BJ (cell line): ENCODE measurements at regions of chr11 and their contacts with region 1.

Region 1: GRCh38 chr11:111530091-111530490 is 10.4 kb upstream of the LAYN start:
- DNase-seq: no peak
- H3K4me3 ChIP-seq: no peak overlapping the region
- H3K27me3 ChIP-seq: no peaks in the 10 kb centered on the region
- CTCF ChIP-seq: no peak

Region 2: DNA sequence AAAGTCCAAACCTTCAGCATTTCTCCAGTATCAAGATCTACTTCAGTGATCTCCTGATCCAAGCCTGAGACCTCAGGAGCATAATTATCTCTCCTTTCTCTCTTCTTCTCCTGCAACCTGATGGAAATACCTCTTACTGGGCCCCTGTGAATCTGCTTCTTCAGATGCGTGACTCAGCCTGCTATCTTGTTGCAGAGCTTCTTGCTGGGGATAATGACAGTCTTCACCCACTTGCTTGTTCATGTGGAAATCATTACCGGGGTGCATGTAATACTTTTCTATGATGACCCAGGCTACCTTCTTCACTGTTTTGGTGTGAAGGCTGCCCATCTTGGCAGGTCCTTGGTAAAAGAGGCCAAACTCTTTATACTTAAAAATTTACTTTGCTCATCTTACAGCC is 424.5 kb before region 1 on chr11:
- CTCF ChIA-PET with region 1: no interaction called
- POLR2A ChIA-PET with region 1: no interaction called
- DNase-seq: no peak
- H3K4me3 ChIP-seq: no peak overlapping the region
- H3K27me3 ChIP-seq: no peaks in the 10 kb centered on the region
- CTCF ChIP-seq: no peak

Region 3: DNA sequence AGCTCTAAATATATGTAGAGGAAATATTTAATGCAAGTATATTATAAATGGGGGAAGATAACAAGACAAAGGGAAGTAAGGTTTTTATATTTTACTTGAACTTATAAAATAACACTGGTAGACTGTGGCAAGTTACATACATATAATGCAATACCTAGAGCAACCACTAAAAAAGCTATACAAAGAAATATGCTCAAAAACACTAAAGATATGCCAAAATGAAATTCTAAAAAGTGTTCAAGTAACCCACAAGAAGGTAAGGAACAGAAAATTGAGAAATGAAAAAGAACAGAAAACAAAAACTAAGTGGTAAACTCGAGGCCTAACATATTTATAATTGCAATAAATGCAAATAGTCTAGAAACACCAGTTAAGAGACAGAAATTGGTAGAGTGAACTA is 50.4 kb before region 1 on chr11:
- CTCF ChIA-PET with region 1: no interaction called
- POLR2A ChIA-PET with region 1: no interaction called
- DNase-seq: no peak
- H3K4me3 ChIP-seq: no peak overlapping the region
- H3K27me3 ChIP-seq: no peaks in the 10 kb centered on the region
- CTCF ChIP-seq: no peak

Region 4: DNA sequence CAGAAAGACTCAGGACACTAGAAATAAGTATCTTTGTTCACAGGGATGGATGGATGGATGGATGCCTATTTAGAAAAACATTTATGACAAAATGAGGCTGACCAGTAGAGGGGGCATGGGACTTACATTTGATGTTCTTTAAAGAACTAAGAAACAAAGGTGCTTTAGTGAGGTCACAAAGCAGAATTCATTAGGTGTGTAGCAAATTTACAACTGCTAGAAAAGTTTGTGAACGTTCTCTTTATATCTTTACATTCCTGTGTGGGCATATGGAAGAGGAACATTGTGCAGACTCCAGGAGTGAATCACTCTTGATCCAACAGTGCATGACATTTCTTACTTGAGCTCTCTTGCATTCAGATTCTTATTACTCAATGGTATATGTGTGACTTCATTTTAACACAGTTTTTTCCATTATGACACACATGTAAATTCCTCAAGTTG is 56.3 kb after region 1 on chr11:
- CTCF ChIA-PET with region 1: no interaction called
- POLR2A ChIA-PET with region 1: interaction called, 10 read pairs
- DNase-seq: no peak
- H3K4me3 ChIP-seq: no peak overlapping the region
- H3K27me3 ChIP-seq: no peaks in the 10 kb centered on the region
- CTCF ChIP-seq: peak; percentile 70